ENCODE measurements at regions of chr12 and their contacts with region 1.

Region 1: GRCh38 chr12:118061011-118061875 is at the start of gene WSB2:
- DNase-seq: peak; percentile 68 to 95 (median 79)

Region 2: DNA sequence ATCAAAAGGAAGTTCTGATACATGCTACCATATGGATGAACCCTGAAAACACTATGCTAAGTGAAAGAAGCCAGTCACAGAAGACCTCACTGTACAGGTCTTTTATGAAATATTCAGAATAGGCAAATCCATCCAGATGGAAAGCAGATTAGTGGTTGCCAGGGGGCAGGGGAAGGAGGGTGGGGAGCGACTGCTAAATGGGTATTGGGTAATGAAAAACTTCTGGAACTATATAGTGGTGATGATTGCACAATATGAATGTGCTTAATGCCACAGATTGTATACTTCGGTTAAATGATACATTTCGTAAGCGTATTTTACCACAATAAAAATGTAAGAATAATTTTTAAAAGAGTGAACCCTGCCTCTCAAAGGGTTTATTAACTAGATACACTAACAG is 80.6 kb before region 1 on chr12:
- intact Hi-C with region 1: no loop called
- DNase-seq: no peak

Region 3: DNA sequence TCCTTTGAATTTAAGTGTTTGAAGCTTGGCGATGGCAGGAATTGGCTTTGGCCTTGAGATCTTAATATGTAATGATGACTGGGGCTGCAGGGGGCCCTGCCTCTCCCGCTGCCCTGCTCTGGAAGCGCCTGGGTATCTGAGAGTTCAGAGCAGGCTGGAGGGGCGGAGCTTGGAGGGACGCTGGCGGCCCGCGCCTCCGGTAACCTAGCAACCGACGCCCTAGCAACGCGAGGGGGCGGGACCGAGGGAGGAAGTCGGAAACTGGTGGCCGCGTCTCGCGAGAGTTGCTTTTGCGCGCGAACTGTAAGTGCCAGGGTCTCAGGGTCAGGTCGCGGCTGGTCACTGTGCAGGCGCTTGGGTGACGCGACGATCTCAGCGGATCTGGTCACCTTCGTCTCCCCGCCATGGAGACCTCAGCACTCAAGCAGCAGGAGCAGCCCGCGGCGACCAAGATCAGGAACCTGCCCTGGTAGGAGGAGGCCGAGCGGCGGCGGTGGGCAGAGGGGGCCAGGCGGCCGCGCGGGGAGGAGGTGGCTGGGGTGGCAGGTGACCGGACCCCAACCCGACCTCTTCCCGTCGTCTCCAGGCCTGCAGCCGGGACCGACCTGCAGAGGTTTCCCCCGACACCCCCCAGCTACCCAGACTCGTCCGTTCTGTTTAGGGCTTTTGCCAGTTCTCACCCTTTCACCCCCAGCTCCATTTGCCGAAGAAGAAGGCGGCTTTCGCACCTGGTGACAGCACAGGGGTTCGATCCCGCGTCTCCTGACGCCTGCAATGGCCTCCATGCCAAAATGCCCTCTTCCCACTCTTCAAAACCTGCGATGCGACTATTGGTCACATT is 44.6 kb before region 1 on chr12 and contains the start of gene RFC5:
- intact Hi-C with region 1: loop called (anchors 5 kb)
- DNase-seq: peak; percentile 92 to 99 (median 97)

Region 4: GRCh38 chr12:118120579-118121363 is 59.5 kb after region 1 on chr12:
- intact Hi-C with region 1: no loop called
- DNase-seq: peak; percentile 29 to 94 (median 77)

Measured in posterior cingulate gyrus (tissue), 11 donors.